Naive thymus-derived CD4-positive, alpha-beta T cell (primary cell): ENCODE measurements at regions of chr1 and their contacts with region 1.

Region 1: GRCh38 chr1:2821966-2822620 is 20.6 kb upstream of the TTC34 start:
- DNase-seq: peak; percentile 22 to 66 (median 53)
- ATAC-seq: peak; percentile 79
- H3K4me3 ChIP-seq: no peak overlapping the region
- H3K4me3 Mint-ChIP-seq: peak overlapping the region in 1 of 10 donors; percentile 37
- H3K27ac ChIP-seq: no peak overlapping the region
- H3K27ac Mint-ChIP-seq: no peak overlapping the region
- H3K4me1 ChIP-seq: peaks cover 0 to 12% of the 10 kb centered on the region in 2 donors
- H3K4me1 Mint-ChIP-seq: peaks cover 0 to 6% (median 4%) of the 10 kb centered on the region in 7 donors
- H3K27me3 ChIP-seq: no peaks in the 10 kb centered on the region
- H3K27me3 Mint-ChIP-seq: peaks cover 0 to 5% (median 0%) of the 10 kb centered on the region in 5 donors

Region 2: GRCh38 chr1:2921970-2922686 is 100.0 kb after region 1 on chr1:
- CTCF ChIA-PET with region 1: no interaction called
- POLR2A ChIA-PET with region 1: no interaction called
- intact Hi-C with region 1: loop called in 1 of 2 experiments (anchors 5 kb)
- DNase-seq: peak in 8 of 9 donors; percentile 15 to 53 (median 27)
- ATAC-seq: peak; percentile 42
- H3K4me3 ChIP-seq: no peak overlapping the region
- H3K4me3 Mint-ChIP-seq: no peak overlapping the region
- H3K27ac ChIP-seq: no peak overlapping the region
- H3K27ac Mint-ChIP-seq: peak overlapping the region in 2 of 9 donors; percentile 10 to 38
- H3K4me1 ChIP-seq: no peaks in the 10 kb centered on the region
- H3K4me1 Mint-ChIP-seq: peaks cover 0 to 3% (median 0%) of the 10 kb centered on the region in 7 donors
- H3K27me3 ChIP-seq: no peaks in the 10 kb centered on the region
- H3K27me3 Mint-ChIP-seq: peaks cover 0 to 3% (median 0%) of the 10 kb centered on the region in 5 donors